GM12878 (cell line): ENCODE measurements at regions of chr6 and their contacts with region 1.

Region 1: GRCh38 chr6:135088818-135089809 is 34.5 kb upstream of the HBS1L start:
- DNase-seq: peak; percentile 63
- ATAC-seq: peak; percentile 91
- H3K4me3 ChIP-seq: peak overlapping the region; percentile 22; the same call in 1 of the 2 replicates
- H3K27ac ChIP-seq: 0 out of 2 replicates have a peak overlapping the region, but pooled peaks have one; percentile 15
- H3K4me1 ChIP-seq: peaks cover 36% of the 10 kb centered on the region
- H3K27me3 ChIP-seq: no peaks in the 10 kb centered on the region; a peak in 1 of 4 replicates
- CTCF ChIP-seq: peak; percentile 26 to 58 (median 43)
- EP300 ChIP-seq: peak; percentile 73 to 93
- POLR2A ChIP-seq: no peak
- RAD21 ChIP-seq: peak; percentile 36

Region 2: DNA sequence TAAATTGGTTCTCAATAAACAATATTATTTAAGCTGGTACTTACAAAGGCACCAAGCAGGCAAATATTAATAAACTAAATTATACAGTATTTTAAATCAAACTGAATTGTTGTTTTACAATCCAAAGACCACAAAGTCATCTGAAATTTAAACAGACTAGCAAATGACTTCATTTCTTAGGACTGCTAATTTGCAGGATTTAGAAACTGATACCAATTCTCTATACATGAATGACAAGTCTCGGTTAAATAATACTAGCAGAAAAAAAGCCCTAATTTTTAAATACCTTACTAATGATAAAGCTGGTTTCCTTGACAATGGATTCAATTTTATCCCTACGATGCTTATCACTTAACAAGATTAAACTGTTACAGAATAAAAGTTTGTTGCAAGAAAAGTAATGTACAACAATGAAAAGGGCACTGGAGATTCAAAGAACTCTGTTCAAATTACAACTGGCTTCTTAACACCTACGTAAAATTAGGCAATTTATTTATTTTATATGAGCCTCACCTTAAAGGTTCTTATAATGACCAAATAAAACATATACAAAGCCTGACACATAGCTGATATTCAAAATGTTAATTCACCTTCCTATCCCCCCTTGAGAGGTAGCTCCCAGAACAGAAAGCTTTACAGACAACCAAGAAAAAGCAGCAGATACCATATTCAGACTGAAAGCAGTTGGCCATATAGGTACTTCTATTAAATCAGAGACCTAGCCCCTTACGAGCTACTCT is 67.6 kb before region 1 on chr6:
- CTCF ChIA-PET with region 1: interaction called, 9 read pairs
- POLR2A ChIA-PET with region 1: interaction called, 6 read pairs
- RAD21 ChIA-PET with region 1: interaction called, 35 read pairs
- SMC1A ChIA-PET with region 1: interaction called, 27 read pairs
- in situ Hi-C with region 1: no loop called
- intact Hi-C with region 1: no loop called
- DNase-seq: no peak
- ATAC-seq: peak; percentile 91
- H3K4me3 ChIP-seq: 0 out of 2 replicates have a peak overlapping the region, but pooled peaks have one; percentile 13
- H3K27ac ChIP-seq: peak overlapping the region; percentile 54; the same call in 1 of the 2 replicates
- H3K4me1 ChIP-seq: peaks cover 12% of the 10 kb centered on the region; the same call in 1 of the 2 replicates
- H3K27me3 ChIP-seq: no peaks in the 10 kb centered on the region
- CTCF ChIP-seq: no peak
- EP300 ChIP-seq: peak in 1 of 2 experiments; percentile 26; a peak in 1 of 4 replicates
- POLR2A ChIP-seq: no peak
- RAD21 ChIP-seq: no peak

Region 3: GRCh38 chr6:135044639-135045038 is 44.5 kb before region 1 on chr6:
- CTCF ChIA-PET with region 1: interaction called, 7 read pairs
- POLR2A ChIA-PET with region 1: interaction called, 15 read pairs
- RAD21 ChIA-PET with region 1: interaction called, 29 read pairs
- SMC1A ChIA-PET with region 1: interaction called, 33 read pairs
- in situ Hi-C with region 1: no loop called
- intact Hi-C with region 1: no loop called
- DNase-seq: no peak
- ATAC-seq: peak; percentile 20
- H3K4me3 ChIP-seq: peak overlapping the region; percentile 6; the same call in 1 of the 2 replicates
- H3K27ac ChIP-seq: 0 out of 2 replicates have a peak overlapping the region, but pooled peaks have one; percentile 13
- H3K4me1 ChIP-seq: peaks cover 9% of the 10 kb centered on the region
- H3K27me3 ChIP-seq: no peaks in the 10 kb centered on the region
- CTCF ChIP-seq: no peak
- EP300 ChIP-seq: no peak
- POLR2A ChIP-seq: no peak
- RAD21 ChIP-seq: no peak

Region 4: DNA sequence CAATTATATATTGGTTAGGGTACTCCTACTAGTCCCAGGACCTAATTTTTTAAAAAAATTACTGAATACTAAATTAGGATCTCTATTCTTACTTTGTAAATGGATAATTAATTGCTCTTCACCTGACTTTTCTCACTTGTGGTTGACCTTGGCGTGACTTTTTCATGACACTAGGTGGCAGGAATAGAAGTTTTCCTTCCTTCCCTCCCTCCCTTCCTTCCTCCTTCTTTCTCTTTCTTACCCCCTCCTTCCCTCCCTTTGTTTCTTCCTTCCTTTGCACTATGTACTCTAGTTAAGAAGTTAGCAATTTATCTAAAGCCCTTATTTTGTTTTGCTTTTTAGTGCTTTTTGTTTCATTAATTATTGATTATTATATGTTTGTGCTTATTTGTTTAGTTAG is 14.1 kb before region 1 on chr6:
- CTCF ChIA-PET with region 1: interaction called, 4 read pairs
- POLR2A ChIA-PET with region 1: interaction called, 8 read pairs
- RAD21 ChIA-PET with region 1: interaction called, 21 read pairs
- SMC1A ChIA-PET with region 1: interaction called, 23 read pairs
- in situ Hi-C with region 1: no loop called
- intact Hi-C with region 1: no loop called
- DNase-seq: no peak
- ATAC-seq: no peak
- H3K4me3 ChIP-seq: no peak overlapping the region
- H3K27ac ChIP-seq: no peak overlapping the region
- H3K4me1 ChIP-seq: no peaks in the 10 kb centered on the region
- H3K27me3 ChIP-seq: no peaks in the 10 kb centered on the region
- CTCF ChIP-seq: peak in 1 of 3 experiments; percentile 27; a peak in 1 of 6 replicates
- EP300 ChIP-seq: no peak
- POLR2A ChIP-seq: no peak
- RAD21 ChIP-seq: no peak

Region 5: DNA sequence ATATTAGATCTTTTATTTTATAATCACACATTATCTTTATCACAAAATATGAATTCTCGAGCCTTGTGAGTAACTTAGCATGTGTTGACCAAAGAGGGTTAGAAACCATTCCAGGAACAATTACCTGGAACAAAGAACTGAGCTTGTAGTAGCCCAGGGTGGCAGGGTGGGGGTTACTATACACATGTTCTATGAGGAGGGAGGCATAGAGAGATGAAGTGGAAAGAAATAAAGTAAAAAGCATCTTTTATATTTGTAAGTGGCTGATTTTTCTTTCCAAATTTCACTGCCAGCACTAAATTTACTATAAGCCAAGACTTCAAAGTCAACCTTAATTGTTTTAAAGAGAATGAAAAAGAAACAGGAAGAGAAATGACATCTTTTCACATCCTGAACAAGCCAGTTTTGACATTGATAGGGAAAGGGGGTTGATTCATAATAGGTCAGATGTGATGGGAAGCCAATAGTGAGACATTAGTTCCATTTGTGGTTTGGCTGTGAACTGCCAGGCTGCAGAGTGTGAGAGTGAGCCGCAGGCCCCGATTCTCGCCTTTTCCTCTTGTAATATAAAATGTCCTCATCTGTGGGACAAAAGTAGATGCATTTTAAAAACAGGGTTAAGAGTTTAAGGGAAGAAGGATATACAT is 39.3 kb after region 1 on chr6:
- CTCF ChIA-PET with region 1: interaction called, 21 read pairs
- POLR2A ChIA-PET with region 1: interaction called, 10 read pairs
- RAD21 ChIA-PET with region 1: interaction called, 16 read pairs
- SMC1A ChIA-PET with region 1: interaction called, 56 read pairs
- in situ Hi-C with region 1: no loop called
- intact Hi-C with region 1: no loop called
- DNase-seq: no peak
- ATAC-seq: peak; percentile 97
- H3K4me3 ChIP-seq: no peak overlapping the region
- H3K27ac ChIP-seq: peak overlapping the region; percentile 45; the same call in 1 of the 2 replicates
- H3K4me1 ChIP-seq: peaks cover 8% of the 10 kb centered on the region
- H3K27me3 ChIP-seq: no peaks in the 10 kb centered on the region
- CTCF ChIP-seq: no peak
- EP300 ChIP-seq: no peak
- POLR2A ChIP-seq: no peak
- RAD21 ChIP-seq: no peak

Region 6: GRCh38 chr6:135162678-135163439 is 73.7 kb after region 1 on chr6:
- CTCF ChIA-PET with region 1: interaction called, 5 read pairs
- POLR2A ChIA-PET with region 1: no interaction called
- RAD21 ChIA-PET with region 1: interaction called, 19 read pairs
- SMC1A ChIA-PET with region 1: interaction called, 8 read pairs
- in situ Hi-C with region 1: no loop called
- intact Hi-C with region 1: no loop called
- DNase-seq: no peak
- ATAC-seq: peak; percentile 65
- H3K4me3 ChIP-seq: peak overlapping the region; percentile 49; the same call in 1 of the 2 replicates
- H3K27ac ChIP-seq: peak overlapping the region; percentile 75
- H3K4me1 ChIP-seq: peaks cover 28% of the 10 kb centered on the region
- H3K27me3 ChIP-seq: no peaks in the 10 kb centered on the region
- CTCF ChIP-seq: peak; percentile 64 to 93 (median 93)
- EP300 ChIP-seq: no peak
- POLR2A ChIP-seq: no peak; the same call in 1 of the 2 replicates
- RAD21 ChIP-seq: peak; percentile 51